HCT116 (cell line): ENCODE measurements at regions of chr11 and their contacts with region 1.

Region 1: GRCh38 chr11:36564376-36565030 is 3.3 kb upstream of the RAG1 start:
- DNase-seq: peak; percentile 24
- ATAC-seq: peak; percentile 72
- H3K4me3 ChIP-seq: no peak overlapping the region
- H3K27ac ChIP-seq: no peak overlapping the region
- H3K4me1 ChIP-seq: no peaks in the 10 kb centered on the region
- H3K27me3 ChIP-seq: peaks cover 31% of the 10 kb centered on the region
- CTCF ChIP-seq: peak; percentile 50 to 65 (median 54)
- POLR2A ChIP-seq: no peak
- RAD21 ChIP-seq: peak; percentile 56

Region 2: GRCh38 chr11:36509694-36510566 is 54.6 kb before region 1 on chr11 and contains the start of gene TRAF6:
- CTCF ChIA-PET with region 1: no interaction called
- POLR2A ChIA-PET with region 1: no interaction called
- RAD21 ChIA-PET with region 1: no interaction called
- intact Hi-C with region 1: no loop called
- DNase-seq: peak; percentile 70
- ATAC-seq: peak; percentile 95
- H3K4me3 ChIP-seq: peak within 1 kb of the TSS; percentile 94 to 95
- H3K27ac ChIP-seq: peak within 1 kb of the TSS; percentile 61
- H3K4me1 ChIP-seq: peaks cover 0 to 12% of the 10 kb centered on the region in 2 experiments; a peak in 1 of 4 replicates
- H3K27me3 ChIP-seq: no peaks in the 10 kb centered on the region
- CTCF ChIP-seq: peak; percentile 78 to 89 (median 82)
- POLR2A ChIP-seq: peak; percentile 44
- RAD21 ChIP-seq: no peak
- total RNA-seq, gene TRAF6: 9.3 TPM

Region 3: DNA sequence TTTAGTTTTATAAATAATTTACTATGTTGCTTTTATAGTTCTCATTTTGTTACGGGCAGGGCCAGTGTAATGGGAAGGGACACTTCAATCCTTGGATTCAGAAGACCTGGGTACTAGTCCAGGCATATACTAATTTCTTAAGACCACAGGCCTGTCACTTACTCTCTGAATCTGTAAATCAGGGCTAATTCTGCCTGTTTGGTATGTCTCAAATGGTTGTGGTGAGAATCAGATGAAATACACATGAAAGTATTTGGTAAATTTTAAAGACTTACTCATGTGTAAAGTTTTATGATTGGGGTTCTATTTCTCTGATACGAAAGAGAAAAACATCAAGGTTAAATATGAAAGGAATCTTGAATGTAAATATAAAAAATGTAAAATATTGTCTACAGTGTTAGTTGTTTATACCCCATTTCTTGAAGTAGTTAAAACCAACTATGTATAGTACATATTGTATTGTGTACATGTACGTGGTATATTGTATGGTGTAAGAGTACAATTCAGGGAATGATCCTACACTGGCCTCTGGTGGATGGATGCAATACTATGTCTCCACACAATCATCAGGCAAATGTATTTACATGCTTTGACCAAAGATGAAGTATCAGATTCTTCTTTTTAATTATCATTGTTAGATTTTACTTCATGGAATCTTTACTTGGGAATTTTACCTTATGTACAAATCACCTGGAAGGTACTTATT is 58.1 kb after region 1 on chr11:
- CTCF ChIA-PET with region 1: interaction called, 12 read pairs
- POLR2A ChIA-PET with region 1: no interaction called
- RAD21 ChIA-PET with region 1: no interaction called
- intact Hi-C with region 1: loop called (anchors 1 kb)
- DNase-seq: peak; percentile 12
- ATAC-seq: peak; percentile 88
- H3K4me3 ChIP-seq: no peak overlapping the region
- H3K27ac ChIP-seq: no peak overlapping the region
- H3K4me1 ChIP-seq: no peaks in the 10 kb centered on the region
- H3K27me3 ChIP-seq: no peaks in the 10 kb centered on the region
- CTCF ChIP-seq: peak; percentile 17 to 61 (median 53); a peak in 5 of 6 replicates
- POLR2A ChIP-seq: no peak
- RAD21 ChIP-seq: peak; percentile 58

Region 4: GRCh38 chr11:36672813-36673450 is 108.4 kb after region 1 on chr11:
- CTCF ChIA-PET with region 1: interaction called, 20 read pairs
- POLR2A ChIA-PET with region 1: no interaction called
- RAD21 ChIA-PET with region 1: no interaction called
- intact Hi-C with region 1: loop called (anchors 1 kb)
- DNase-seq: peak; percentile 38
- ATAC-seq: peak; percentile 70
- H3K4me3 ChIP-seq: no peak overlapping the region
- H3K27ac ChIP-seq: no peak overlapping the region
- H3K4me1 ChIP-seq: no peaks in the 10 kb centered on the region
- H3K27me3 ChIP-seq: no peaks in the 10 kb centered on the region
- CTCF ChIP-seq: peak; percentile 29 to 83 (median 62); a peak in 5 of 6 replicates
- POLR2A ChIP-seq: no peak
- RAD21 ChIP-seq: peak; percentile 31; the same call in 1 of the 2 replicates

Region 5: DNA sequence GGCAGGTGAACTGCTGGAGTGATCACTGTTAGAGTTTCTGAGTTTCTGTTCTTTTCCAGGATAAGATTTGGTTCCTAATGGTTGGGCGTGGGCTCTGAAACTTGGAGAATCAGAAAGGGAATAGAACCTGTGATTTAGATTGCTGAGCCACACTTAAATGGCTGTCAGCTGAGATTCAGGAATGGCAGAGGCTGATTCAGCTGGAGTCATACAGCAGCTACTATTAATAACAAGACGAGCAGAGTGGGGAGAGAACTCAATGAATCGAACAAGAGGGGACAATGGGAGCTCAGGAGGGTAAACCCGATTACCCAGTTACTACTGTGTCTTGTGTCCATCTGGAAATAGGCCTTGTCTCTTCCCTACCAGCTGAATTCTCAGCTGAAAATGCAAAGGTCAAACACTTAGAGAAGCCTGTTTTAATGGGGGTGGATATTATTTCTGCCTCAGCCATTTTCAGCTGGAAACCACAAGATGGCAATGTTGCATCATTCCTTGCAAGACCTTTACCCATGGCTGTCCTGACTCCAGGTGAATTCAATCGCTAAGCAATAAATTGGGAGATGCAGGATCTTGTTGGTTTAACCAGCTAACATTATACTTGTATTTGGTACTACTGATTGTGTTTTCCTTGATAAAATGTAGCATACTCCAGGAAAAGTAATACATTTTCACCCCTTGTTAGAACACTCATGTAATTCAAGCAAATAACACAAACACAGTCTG is 138.0 kb after region 1 on chr11:
- CTCF ChIA-PET with region 1: interaction called, 20 read pairs
- POLR2A ChIA-PET with region 1: no interaction called
- RAD21 ChIA-PET with region 1: no interaction called
- intact Hi-C with region 1: no loop called
- DNase-seq: peak; percentile 66
- ATAC-seq: peak; percentile 98
- H3K4me3 ChIP-seq: no peak overlapping the region
- H3K27ac ChIP-seq: no peak overlapping the region
- H3K4me1 ChIP-seq: no peaks in the 10 kb centered on the region
- H3K27me3 ChIP-seq: peaks cover 18% of the 10 kb centered on the region; the same call in 1 of the 2 replicates
- CTCF ChIP-seq: peak; percentile 76 to 81 (median 81); a peak in 5 of 6 replicates
- POLR2A ChIP-seq: no peak
- RAD21 ChIP-seq: peak; percentile 80